WTC11 (cell line): ENCODE measurements at regions of chr11 and their contacts with region 1.

Region 1: GRCh38 chr11:85854557-85855340 is 434 bp upstream of the CCDC83 start:
- DNase-seq: peak; percentile 94
- ATAC-seq: peak; percentile 96
- H3K4me3 Mint-ChIP-seq: peak overlapping the region; percentile 76
- H3K27ac Mint-ChIP-seq: peak overlapping the region; percentile 49; the same call in 1 of the 2 replicates
- H3K4me1 Mint-ChIP-seq: peaks cover 11% of the 10 kb centered on the region
- H3K27me3 Mint-ChIP-seq: peaks cover 5% of the 10 kb centered on the region
- CTCF ChIP-seq: peak; percentile 94

Region 2: GRCh38 chr11:85647604-85648299 is 207.0 kb before region 1 on chr11 and contains the start of gene TMEM126A:
- CTCF ChIA-PET with region 1: interaction called, 12 read pairs
- POLR2A ChIA-PET with region 1: no interaction called
- DNase-seq: peak; percentile 90
- ATAC-seq: peak; percentile 93
- H3K4me3 Mint-ChIP-seq: peak within 1 kb of the TSS; percentile 91
- H3K27ac Mint-ChIP-seq: peak within 1 kb of the TSS; percentile 95
- H3K4me1 Mint-ChIP-seq: peaks cover 32% of the 10 kb centered on the region
- H3K27me3 Mint-ChIP-seq: no peaks in the 10 kb centered on the region
- CTCF ChIP-seq: no peak
- total RNA-seq, gene TMEM126A: 34.6 to 37.2 TPM (median 36.9 TPM) in 3 replicates

Region 3: DNA sequence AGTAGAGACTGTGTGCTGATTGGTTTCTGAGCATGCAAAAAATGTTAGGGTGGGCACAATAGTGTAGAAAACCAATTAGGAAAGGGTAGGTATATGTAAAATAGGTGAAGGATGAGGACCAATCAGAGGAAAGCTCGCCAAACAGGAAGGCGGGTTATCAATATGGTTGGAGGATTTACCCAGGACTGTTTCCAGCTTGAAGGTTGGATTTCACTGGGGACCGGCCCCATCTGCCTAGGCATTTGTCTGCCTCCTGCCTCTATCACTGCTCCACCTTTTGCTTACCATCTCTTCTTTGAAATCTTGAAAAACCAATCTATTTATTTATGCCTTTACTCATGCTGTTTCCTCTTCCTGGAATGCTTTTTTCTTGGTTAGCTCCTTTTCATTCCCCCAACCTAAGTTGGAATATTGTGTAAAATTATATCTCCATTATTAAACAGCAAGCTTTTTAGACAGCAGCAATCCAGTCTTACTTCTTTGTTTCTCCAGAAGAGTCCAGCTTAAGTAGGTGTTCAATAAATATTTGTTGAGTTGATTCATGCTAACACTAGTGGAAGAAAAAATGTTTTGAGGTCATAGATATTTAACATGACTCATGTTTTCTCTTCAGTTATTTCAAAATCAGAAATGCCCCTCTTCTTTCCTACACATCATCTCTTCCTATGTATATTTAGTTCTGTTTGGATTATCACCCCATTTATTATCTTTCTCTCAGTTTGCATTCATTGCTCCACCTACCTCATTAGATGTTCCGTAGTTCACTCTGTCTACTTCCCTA is 20.6 kb after region 1 on chr11:
- CTCF ChIA-PET with region 1: interaction called, 10 read pairs
- POLR2A ChIA-PET with region 1: no interaction called
- DNase-seq: no peak
- ATAC-seq: peak; percentile 61
- H3K4me3 Mint-ChIP-seq: no peak overlapping the region
- H3K27ac Mint-ChIP-seq: no peak overlapping the region
- H3K4me1 Mint-ChIP-seq: no peaks in the 10 kb centered on the region
- H3K27me3 Mint-ChIP-seq: no peaks in the 10 kb centered on the region
- CTCF ChIP-seq: no peak

Region 4: GRCh38 chr11:86193297-86194095 is 338.7 kb after region 1 on chr11:
- CTCF ChIA-PET with region 1: interaction called, 19 read pairs
- POLR2A ChIA-PET with region 1: interaction called, 4 read pairs
- DNase-seq: peak; percentile 82
- ATAC-seq: peak; percentile 100
- H3K4me3 Mint-ChIP-seq: peak overlapping the region; percentile 47
- H3K27ac Mint-ChIP-seq: no peak overlapping the region
- H3K4me1 Mint-ChIP-seq: peaks cover 9% of the 10 kb centered on the region
- H3K27me3 Mint-ChIP-seq: peaks cover 8% of the 10 kb centered on the region
- CTCF ChIP-seq: peak; percentile 54